Pancreas (tissue), 10 donors: ENCODE measurements at regions of chr10 and their contacts with region 1.

Region 1: DNA sequence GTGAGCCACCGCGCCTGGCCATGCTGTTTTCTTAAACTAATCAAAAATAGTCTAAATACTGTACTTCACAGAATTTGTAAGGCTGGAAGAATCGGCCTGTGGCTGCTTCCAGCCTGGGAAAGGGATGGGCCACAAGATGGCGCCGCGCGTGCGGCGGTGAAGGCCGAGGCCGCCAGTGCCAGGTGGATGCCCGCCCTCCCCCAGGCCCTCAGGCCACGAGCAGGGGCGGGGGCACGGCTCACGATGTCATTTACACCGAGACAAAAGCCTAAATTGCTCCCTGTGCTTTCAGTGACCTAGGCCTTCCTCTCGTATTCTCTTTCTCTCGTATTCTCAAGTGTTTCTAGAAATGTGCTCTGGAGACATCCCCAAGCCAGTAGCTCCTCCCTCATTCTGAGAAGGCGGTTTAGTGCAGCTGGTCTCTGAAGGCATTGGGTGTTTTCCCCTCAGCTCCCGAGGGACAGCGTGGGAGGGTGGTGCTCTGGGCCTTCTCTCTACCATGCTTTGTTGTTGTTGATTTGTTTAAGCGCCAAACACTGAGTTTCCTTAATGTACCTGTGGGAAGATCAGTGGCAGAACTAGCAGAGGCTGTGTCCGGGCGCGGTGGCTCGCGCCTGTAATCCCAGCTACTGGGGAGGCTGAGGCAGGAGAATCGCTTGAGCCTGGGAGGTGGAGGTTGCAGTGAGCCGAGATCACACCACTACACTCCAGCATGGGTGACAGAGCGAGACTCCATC is 68.4 kb downstream of the CDC123 start:
- DNase-seq: peak; percentile 71 to 92 (median 80)
- ATAC-seq: peak; percentile 74 to 90 (median 83)
- H3K4me3 ChIP-seq: peak overlapping the region in 2 of 4 donors; percentile 23 to 25
- H3K27ac ChIP-seq: peak overlapping the region in 2 of 4 donors; percentile 12 to 68
- H3K4me1 ChIP-seq: peaks cover 5 to 20% (median 9%) of the 10 kb centered on the region in 3 donors
- H3K27me3 ChIP-seq: no peaks in the 10 kb centered on the region
- CTCF ChIP-seq: peak; percentile 27 to 75 (median 64)

Region 2: GRCh38 chr10:12348870-12349628 is 84.7 kb after region 1 on chr10 and contains the start of gene CAMK1D:
- intact Hi-C with region 1: loop called in 1 of 3 experiments (anchors 5 kb)
- DNase-seq: peak; percentile 84 to 93 (median 90)
- ATAC-seq: peak; percentile 57 to 73 (median 64)
- H3K4me3 ChIP-seq: peak within 1 kb of the TSS; percentile 69 to 95 (median 84)
- H3K27ac ChIP-seq: peak within 1 kb of the TSS; percentile 85 to 89 (median 86)
- H3K4me1 ChIP-seq: peaks cover 18 to 26% (median 25%) of the 10 kb centered on the region in 3 donors
- H3K27me3 ChIP-seq: no peaks in the 10 kb centered on the region
- CTCF ChIP-seq: no peak
- total RNA-seq, gene CAMK1D: 20.2 to 30.1 (median 24.2) TPM

Region 3: GRCh38 chr10:12484941-12485805 is 220.8 kb after region 1 on chr10:
- intact Hi-C with region 1: loop called in 1 of 3 experiments (anchors 10 kb)
- DNase-seq: peak; percentile 54 to 80 (median 62)
- ATAC-seq: peak; percentile 60 to 82 (median 76)
- H3K4me3 ChIP-seq: peak overlapping the region in 1 of 4 donors; percentile 17
- H3K27ac ChIP-seq: peak overlapping the region; percentile 30 to 66 (median 50)
- H3K4me1 ChIP-seq: peaks cover 10 to 27% (median 17%) of the 10 kb centered on the region in 3 donors
- H3K27me3 ChIP-seq: no peaks in the 10 kb centered on the region
- CTCF ChIP-seq: no peak

Region 4: GRCh38 chr10:12656518-12657142 is 392.3 kb after region 1 on chr10:
- intact Hi-C with region 1: loop called in 1 of 3 experiments (anchors 10 kb)
- DNase-seq: no peak
- ATAC-seq: peak; percentile 72 to 94 (median 86)
- H3K4me3 ChIP-seq: no peak overlapping the region
- H3K27ac ChIP-seq: no peak overlapping the region
- H3K4me1 ChIP-seq: no peaks in the 10 kb centered on the region
- H3K27me3 ChIP-seq: no peaks in the 10 kb centered on the region
- CTCF ChIP-seq: peak in 3 of 4 donors; percentile 23 to 52 (median 49)

Region 5: DNA sequence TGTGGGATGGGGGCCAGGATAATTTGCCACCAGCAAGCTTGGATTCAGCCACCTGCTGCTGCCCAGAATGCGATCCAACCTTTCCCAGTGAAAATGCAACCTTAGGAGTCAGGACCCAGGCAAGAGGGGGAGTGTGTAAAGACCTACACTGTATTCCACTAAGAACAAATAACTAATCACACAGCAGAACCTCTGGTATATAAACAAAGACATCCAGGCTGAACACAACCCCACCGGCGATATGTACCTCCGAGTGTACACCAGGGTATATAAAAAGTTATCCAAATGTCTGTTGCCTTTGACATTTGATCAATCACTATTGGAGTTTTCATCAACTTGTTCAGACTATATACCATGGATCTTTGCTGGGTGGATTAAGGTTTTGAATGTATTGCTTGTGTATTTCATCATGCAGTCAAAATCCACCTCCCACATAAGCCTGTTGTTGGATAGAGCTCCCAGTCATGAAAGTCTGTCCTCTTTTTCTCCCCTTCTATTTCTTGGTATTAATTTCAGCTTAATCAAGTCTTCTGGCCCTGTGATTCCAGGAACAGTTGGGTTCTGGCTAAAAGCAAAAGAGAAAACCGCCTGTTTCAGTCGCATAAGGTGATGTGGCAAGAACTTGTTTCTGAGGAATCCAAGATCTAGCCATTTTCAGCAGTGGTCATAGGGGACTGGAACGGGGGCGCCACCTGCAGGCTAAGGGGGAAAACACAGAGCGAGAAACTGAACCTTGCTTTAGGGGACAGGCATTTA is 446.4 kb after region 1 on chr10:
- intact Hi-C with region 1: loop called in 2 of 3 experiments (anchors 10 kb)
- DNase-seq: peak; percentile 54 to 88 (median 78)
- ATAC-seq: peak; percentile 85 to 91 (median 88)
- H3K4me3 ChIP-seq: no peak overlapping the region
- H3K27ac ChIP-seq: no peak overlapping the region
- H3K4me1 ChIP-seq: peaks cover 0 to 38% (median 14%) of the 10 kb centered on the region in 3 donors
- H3K27me3 ChIP-seq: no peaks in the 10 kb centered on the region
- CTCF ChIP-seq: peak; percentile 70 to 86 (median 74)